ENCODE measurements at regions of chr2 and their contacts with region 1.

Region 1: DNA sequence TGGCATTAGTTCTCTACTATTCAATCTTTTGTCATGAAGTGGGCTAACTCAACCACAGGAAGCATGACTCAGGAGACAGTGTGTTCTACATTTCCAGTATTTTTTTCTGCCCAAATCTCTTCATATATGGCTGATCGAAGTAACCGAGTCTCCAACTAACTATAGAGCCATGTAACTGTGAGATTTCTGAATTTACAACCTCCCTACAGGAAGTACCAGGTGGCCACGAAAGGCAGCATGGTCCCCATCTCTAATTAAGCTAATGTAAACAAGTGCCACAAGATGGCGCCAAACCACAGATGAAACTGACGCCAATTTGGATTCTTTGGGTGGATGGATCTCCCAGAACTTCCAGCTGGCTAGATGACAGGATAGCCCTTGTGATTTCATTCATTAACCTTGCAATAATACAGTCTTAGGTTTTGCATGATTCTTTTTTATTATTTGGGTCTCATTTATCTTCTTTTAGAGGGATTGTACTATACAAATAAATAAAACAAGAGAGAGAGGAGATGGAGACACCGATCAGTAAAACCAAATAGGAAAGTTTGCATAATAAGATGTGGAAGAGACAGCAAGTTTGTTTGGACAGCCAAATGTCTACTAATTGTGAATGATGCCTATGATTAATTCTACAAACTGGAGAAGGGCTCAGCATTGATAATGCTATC is 18.3 kb upstream of the ARHGAP15 start:
- ATAC-seq: peak in 5 of 8 experiments; percentile 29 to 90 (median 81)
- H3K4me3 ChIP-seq: no peak overlapping the region
- H3K27ac ChIP-seq: no peak overlapping the region
- H3K4me1 ChIP-seq: no peaks in the 10 kb centered on the region

Region 2: GRCh38 chr2:143205106-143205764 is 94.3 kb after region 1 on chr2:
- in situ Hi-C with region 1: loop called in 1 of 9 experiments (anchors 25 kb)
- ATAC-seq: peak in 3 of 8 experiments; percentile 36 to 43 (median 42)
- H3K4me3 ChIP-seq: no peak overlapping the region
- H3K27ac ChIP-seq: no peak overlapping the region
- H3K4me1 ChIP-seq: no peaks in the 10 kb centered on the region

Measured in motor neuron (in vitro differentiated cells).